A673 (cell line): ENCODE measurements at regions of chr3 and their contacts with region 1.

Region 1: GRCh38 chr3:38346587-38347410 is at the start of gene XYLB:
- DNase-seq: peak; percentile 73
- H3K4me3 ChIP-seq: peak within 1 kb of the TSS; percentile 56
- H3K27ac ChIP-seq: peak within 1 kb of the TSS; percentile 10
- H3K4me1 ChIP-seq: no peaks in the 10 kb centered on the region
- H3K27me3 ChIP-seq: no peaks in the 10 kb centered on the region
- CTCF ChIP-seq: peak; percentile 62
- total RNA-seq, gene XYLB: 3.6 and 4.7 TPM in 2 replicates

Region 2: GRCh38 chr3:38136777-38137614 is 209.8 kb before region 1 on chr3 and contains the start of gene ACAA1:
- CTCF ChIA-PET with region 1: interaction called, 3 read pairs
- POLR2A ChIA-PET with region 1: no interaction called
- intact Hi-C with region 1: loop called (anchors 10 kb)
- DNase-seq: peak; percentile 96
- H3K4me3 ChIP-seq: peak within 1 kb of the TSS; percentile 81
- H3K27ac ChIP-seq: peak within 1 kb of the TSS; percentile 71
- H3K4me1 ChIP-seq: peaks cover 4% of the 10 kb centered on the region
- H3K27me3 ChIP-seq: no peaks in the 10 kb centered on the region
- CTCF ChIP-seq: no peak
- total RNA-seq, gene ACAA1: 24.0 and 27.4 TPM in 2 replicates

Region 3: GRCh38 chr3:38479431-38480092 is 132.8 kb after region 1 on chr3:
- CTCF ChIA-PET with region 1: interaction called, 3 read pairs
- POLR2A ChIA-PET with region 1: no interaction called
- intact Hi-C with region 1: loop called (anchors 5 kb)
- DNase-seq: peak; percentile 30
- H3K4me3 ChIP-seq: no peak overlapping the region
- H3K27ac ChIP-seq: no peak overlapping the region
- H3K4me1 ChIP-seq: no peaks in the 10 kb centered on the region
- H3K27me3 ChIP-seq: no peaks in the 10 kb centered on the region
- CTCF ChIP-seq: peak; percentile 64